A673 (cell line): ENCODE measurements at regions of chrX and their contacts with region 1.

Region 1: GRCh38 chrX:109927663-109928273 is 75.1 kb upstream of the TMEM164 start:
- DNase-seq: no peak
- H3K4me3 ChIP-seq: no peak overlapping the region
- H3K27ac ChIP-seq: no peak overlapping the region
- H3K4me1 ChIP-seq: no peaks in the 10 kb centered on the region
- H3K27me3 ChIP-seq: no peaks in the 10 kb centered on the region
- CTCF ChIP-seq: no peak

Region 2: DNA sequence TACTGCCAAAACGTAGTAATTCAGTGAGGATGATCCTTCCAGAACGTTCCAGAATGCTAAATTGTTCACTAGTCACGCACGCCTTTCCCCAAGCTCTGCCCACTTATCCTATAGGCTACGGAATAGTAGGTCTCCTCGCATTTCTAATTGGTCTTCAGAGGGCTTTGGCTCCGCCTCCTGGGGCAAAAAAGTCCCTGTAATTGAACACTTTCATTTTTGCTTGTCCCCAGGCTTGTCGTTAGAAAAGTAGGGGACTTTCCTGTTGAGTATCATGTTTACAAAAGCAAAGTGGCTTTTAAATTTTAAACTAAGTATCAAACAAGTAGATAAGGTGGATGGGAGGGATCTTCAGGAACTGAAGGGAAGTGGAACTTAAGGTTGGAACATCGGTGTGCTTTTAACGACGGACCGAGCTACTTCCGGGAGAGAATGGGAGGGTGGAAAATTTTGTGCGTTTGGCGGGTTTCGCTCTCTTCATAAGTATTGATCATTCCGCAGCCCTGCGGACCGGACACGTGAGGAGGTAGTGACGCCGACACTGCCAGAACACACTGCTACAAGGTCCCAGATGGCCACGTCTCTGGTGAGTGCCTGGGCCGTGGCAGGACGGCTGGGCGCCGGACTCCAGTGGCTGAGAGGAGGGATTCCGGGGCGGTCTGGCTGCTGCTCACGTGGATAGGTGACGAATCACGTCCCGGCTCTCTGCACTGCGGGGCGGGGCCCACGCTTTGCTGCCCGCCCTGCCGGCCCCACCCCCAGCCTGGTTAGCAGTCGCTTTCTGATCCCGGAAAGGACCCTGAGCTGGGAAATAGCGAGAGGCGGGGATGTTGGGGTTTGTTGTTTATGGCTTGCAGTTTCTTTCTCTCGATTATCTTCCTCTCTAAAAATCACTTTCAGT is 391.1 kb before region 1 on chrX and contains the start of gene NXT2:
- CTCF ChIA-PET with region 1: no interaction called
- POLR2A ChIA-PET with region 1: no interaction called
- intact Hi-C with region 1: no loop called
- DNase-seq: peak; percentile 92
- H3K4me3 ChIP-seq: peak within 1 kb of the TSS; percentile 54
- H3K27ac ChIP-seq: peak within 1 kb of the TSS; percentile 76
- H3K4me1 ChIP-seq: no peaks in the 10 kb centered on the region
- H3K27me3 ChIP-seq: no peaks in the 10 kb centered on the region
- CTCF ChIP-seq: no peak
- total RNA-seq, gene NXT2: 11.4 and 11.6 TPM in 2 replicates

Region 3: GRCh38 chrX:109774706-109775105 is 153.1 kb before region 1 on chrX:
- CTCF ChIA-PET with region 1: no interaction called
- POLR2A ChIA-PET with region 1: interaction called, 11 read pairs
- intact Hi-C with region 1: no loop called
- DNase-seq: no peak
- H3K4me3 ChIP-seq: no peak overlapping the region
- H3K27ac ChIP-seq: no peak overlapping the region
- H3K4me1 ChIP-seq: no peaks in the 10 kb centered on the region
- H3K27me3 ChIP-seq: no peaks in the 10 kb centered on the region
- CTCF ChIP-seq: no peak

Region 4: GRCh38 chrX:110002300-110003166 is 74.8 kb after region 1 on chrX and contains the start of gene TMEM164:
- CTCF ChIA-PET with region 1: no interaction called
- POLR2A ChIA-PET with region 1: no interaction called
- intact Hi-C with region 1: no loop called
- DNase-seq: peak; percentile 80
- H3K4me3 ChIP-seq: peak within 1 kb of the TSS; percentile 58
- H3K27ac ChIP-seq: peak within 1 kb of the TSS; percentile 78
- H3K4me1 ChIP-seq: peaks cover 4% of the 10 kb centered on the region
- H3K27me3 ChIP-seq: no peaks in the 10 kb centered on the region
- CTCF ChIP-seq: no peak
- total RNA-seq, gene TMEM164: 22.3 and 26.5 TPM in 2 replicates

Region 5: DNA sequence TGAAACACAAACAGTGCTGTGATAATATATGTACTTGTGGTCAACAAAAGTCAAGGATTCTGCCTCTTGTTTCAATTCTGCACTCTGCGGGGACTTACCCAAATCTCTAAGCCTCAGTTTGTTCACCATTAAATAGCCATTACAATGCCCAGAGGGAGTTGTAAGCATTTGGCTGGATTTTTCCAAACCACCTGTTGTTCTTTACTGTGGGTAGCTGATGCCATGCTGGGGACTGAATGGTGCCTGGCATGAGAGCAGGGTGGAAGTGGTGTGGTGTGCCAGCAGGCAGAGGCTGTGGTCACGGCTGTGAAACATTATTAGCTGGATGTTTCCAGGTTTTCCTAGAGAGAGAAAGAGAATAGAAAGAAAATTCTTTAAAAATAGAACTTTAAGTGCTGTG is 1107.5 kb after region 1 on chrX:
- CTCF ChIA-PET with region 1: no interaction called
- POLR2A ChIA-PET with region 1: no interaction called
- intact Hi-C with region 1: no loop called
- DNase-seq: no peak
- H3K4me3 ChIP-seq: no peak overlapping the region
- H3K27ac ChIP-seq: no peak overlapping the region
- H3K4me1 ChIP-seq: no peaks in the 10 kb centered on the region
- H3K27me3 ChIP-seq: peaks cover 16% of the 10 kb centered on the region
- CTCF ChIP-seq: no peak